GM18951 (cell line): ENCODE measurements at regions of chr3 and their contacts with region 1.

Region 1: DNA sequence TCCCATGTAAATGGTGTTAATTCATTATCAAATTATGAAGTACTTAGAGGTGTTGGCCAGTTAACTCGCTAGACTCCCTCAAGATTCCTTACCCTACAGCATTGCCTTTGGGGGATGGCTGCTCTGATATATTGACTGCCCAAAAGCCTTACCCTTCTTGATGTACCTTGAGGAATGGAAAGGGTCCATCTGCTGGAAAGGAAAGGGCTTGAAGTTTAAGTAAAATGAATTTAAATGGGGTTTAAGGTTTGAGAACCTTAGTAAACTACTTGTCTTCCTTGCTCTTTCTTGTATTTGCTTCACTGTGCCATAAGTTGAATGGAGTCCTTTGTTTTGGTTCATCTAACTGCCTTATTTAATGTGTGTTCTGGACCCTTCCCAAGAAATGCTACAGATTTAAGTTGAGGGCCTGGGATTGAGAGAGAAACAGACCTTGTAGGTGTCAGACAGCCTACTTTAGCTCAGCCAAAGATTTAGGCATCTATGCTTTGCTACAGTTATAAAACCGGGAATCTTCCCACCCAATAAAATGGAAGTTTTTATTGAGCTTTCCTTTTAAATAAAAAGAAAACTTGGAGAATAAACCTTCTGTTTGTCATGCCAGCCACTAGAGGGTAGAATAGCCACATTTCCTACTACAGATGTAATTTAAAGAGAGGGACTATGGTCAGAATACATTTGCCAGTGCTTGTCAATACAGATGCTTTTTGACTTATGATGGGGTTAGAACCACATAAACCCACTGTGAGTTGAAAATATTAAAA is 25.3 kb downstream of the CMSS1 start:
- POLR2A ChIP-seq: no peak

Region 2: GRCh38 chr3:100057716-100058575 is 214.9 kb after region 1 on chr3:
- in situ Hi-C with region 1: loop called (anchors 10 kb)
- POLR2A ChIP-seq: no peak

Region 3: GRCh38 chr3:100590114-100590839 is 747.3 kb after region 1 on chr3:
- in situ Hi-C with region 1: loop called (anchors 25 kb)
- POLR2A ChIP-seq: no peak